SK-N-SH (cell line): ENCODE measurements at regions of chr16 and their contacts with region 1.

Region 1: GRCh38 chr16:66275775-66276428 is 90.6 kb upstream of the CDH5 start:
- DNase-seq: peak; percentile 55
- H3K4me3 ChIP-seq: no peak overlapping the region
- H3K27ac ChIP-seq: no peak overlapping the region
- H3K4me1 ChIP-seq: no peaks in the 10 kb centered on the region; a peak in 1 of 4 replicates
- H3K27me3 ChIP-seq: no peaks in the 10 kb centered on the region
- CTCF ChIP-seq: peak; percentile 69
- EP300 ChIP-seq: no peak
- RAD21 ChIP-seq: peak; percentile 66

Region 2: GRCh38 chr16:66315210-66315825 is 39.4 kb after region 1 on chr16:
- CTCF ChIA-PET with region 1: interaction called, 21 read pairs
- POLR2A ChIA-PET with region 1: no interaction called
- DNase-seq: peak; percentile 79
- H3K4me3 ChIP-seq: no peak overlapping the region; a peak in 1 of 4 replicates
- H3K27ac ChIP-seq: no peak overlapping the region
- H3K4me1 ChIP-seq: no peaks in the 10 kb centered on the region; a peak in 1 of 4 replicates
- H3K27me3 ChIP-seq: peaks cover 7% of the 10 kb centered on the region; the same call in 1 of the 2 replicates
- CTCF ChIP-seq: peak; percentile 96
- EP300 ChIP-seq: no peak
- RAD21 ChIP-seq: peak; percentile 93